Activated CD4-positive, alpha-beta memory T cell treated with anti-CD3 and anti-CD28 coated beads, Interleukin-2, amount 10 ng/mL, durations not matched to agents 7 days and 5 days (primary cell): ENCODE measurements at regions of chr10 and their contacts with region 1.

Region 1: GRCh38 chr10:29501692-29502091 is 133.1 kb downstream of the SVIL start:
- DNase-seq: no peak
- H3K4me3 Mint-ChIP-seq: no peak overlapping the region
- H3K27ac Mint-ChIP-seq: no peak overlapping the region
- H3K4me1 Mint-ChIP-seq: no peaks in the 10 kb centered on the region
- H3K27me3 Mint-ChIP-seq: no peaks in the 10 kb centered on the region

Region 2: DNA sequence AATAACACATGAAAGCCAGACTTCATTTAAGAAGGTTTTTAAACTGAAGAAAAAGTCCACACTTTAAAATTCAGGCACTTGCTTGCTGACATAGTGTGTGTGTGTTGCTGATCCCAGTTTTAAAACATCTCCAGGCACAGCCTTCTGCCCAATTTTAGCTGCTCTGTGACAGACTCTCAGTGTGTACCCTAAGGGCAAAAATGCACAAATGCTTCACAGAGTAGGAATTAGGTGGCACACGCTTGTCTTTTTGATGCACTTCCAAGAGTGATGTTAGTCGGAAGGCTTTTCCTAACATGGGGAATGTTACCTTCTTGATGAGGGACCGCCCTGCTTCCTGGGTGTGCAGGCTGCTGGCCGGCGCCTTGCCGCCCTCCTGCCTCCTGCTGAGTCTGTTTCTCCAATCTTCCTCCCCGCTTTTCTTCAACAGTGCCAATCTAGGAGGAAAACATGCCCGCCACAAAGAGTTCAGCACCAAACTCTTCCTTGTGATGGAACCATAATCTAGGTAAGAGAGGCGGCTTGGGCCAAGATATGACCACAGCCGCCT is 10.8 kb after region 1 on chr10:
- CTCF ChIA-PET with region 1: interaction called, 13 read pairs
- POLR2A ChIA-PET with region 1: no interaction called
- DNase-seq: no peak
- H3K4me3 Mint-ChIP-seq: no peak overlapping the region
- H3K27ac Mint-ChIP-seq: no peak overlapping the region
- H3K4me1 Mint-ChIP-seq: no peaks in the 10 kb centered on the region
- H3K27me3 Mint-ChIP-seq: no peaks in the 10 kb centered on the region